Posterior vena cava (tissue), 2 donors: ENCODE measurements at regions of chr2 and their contacts with region 1.

Region 1: DNA sequence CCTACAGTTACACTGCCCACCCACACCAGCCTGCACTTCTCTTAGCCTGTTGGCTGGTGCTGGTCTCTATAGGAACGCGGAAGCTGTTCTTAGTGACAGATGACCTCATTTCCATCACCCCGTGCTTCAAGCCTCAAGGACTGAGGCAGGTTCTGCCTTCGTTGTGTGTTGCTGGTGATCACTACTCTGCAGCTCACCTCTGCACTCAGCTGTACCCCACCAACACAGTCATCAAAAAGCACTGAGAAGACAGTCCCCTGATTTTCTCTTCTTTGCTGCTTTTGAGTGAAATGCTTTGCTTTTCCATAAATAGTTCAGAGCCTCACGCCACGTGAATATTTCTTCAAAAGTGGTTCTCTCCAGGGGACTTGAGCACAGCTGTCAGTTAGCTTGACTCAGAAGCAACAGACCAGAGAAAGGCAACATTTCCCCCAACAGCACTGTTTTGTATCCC is 225.7 kb upstream of the CCDC150 start:
- DNase-seq: no peak

Region 2: GRCh38 chr2:195124391-195125079 is 1289.3 kb before region 1 on chr2:
- intact Hi-C with region 1: loop called in 1 of 2 experiments (anchors 5 kb)
- DNase-seq: peak; percentile 64